PC-3 (cell line): ENCODE measurements at regions of chr4 and their contacts with region 1.

Region 1: DNA sequence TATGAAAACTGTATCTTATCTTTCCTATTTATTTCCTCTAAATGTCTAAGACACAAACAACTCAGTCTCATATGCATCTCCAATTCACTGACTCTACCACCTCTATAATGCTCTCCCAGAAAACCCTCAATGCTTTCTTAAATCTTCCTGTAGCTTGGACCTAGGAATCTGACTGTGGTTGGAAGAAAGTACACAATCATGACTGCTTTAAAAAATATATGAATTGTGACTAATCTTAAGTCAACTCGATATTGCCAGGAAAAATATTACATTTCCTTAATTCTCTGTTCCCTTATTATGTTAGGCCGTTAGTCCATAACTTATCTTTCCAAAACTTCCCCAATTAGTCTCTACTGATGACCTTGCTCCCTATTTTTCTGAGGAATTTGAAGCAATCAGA is 87.0 kb downstream of the SPCS3 start:
- DNase-seq: peak; percentile 63
- ATAC-seq: peak; percentile 88
- H3K4me3 ChIP-seq: no peak overlapping the region
- H3K27ac ChIP-seq: peak overlapping the region; percentile 65
- H3K4me1 ChIP-seq: peaks cover 40% of the 10 kb centered on the region
- H3K27me3 ChIP-seq: no peaks in the 10 kb centered on the region
- CTCF ChIP-seq: no peak

Region 2: DNA sequence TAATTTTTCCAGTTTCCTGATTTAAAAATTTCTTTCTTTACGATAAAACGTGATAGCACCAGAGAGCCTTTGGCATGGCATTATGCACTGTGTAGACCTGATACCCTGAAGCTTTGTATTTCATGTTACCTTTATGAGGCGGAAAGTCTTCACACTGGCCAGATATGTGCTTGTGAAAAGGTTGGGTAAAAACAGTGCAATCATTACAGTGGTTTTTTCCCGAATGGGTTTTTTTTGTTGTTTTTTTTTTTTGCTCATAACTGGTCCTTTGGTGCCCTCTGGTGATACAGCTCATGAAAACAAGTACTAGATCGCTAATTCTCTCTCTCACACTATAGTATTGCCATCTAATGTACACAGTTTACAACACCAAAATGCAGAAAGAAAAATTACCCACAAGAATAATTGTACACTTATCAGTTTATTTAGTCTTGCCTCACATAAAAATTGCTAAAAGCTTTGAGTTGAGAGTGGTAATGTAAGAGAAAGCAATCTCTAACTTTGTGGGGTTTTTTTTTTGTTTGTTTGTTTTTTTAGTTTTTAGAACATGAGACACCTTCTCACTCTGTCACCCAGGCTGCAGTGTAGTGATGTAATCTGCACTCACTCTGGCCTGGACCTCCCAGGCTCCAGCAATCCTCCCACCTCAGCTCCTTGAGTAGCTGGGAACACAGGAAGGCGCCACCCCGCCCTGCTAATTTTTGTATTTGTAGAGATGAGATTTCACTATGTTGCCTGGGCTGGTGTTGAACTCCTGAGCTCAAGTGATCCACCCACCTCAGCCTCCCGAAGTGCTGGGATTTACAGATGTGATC is 65.7 kb before region 1 on chr4:
- CTCF ChIA-PET with region 1: no interaction called
- POLR2A ChIA-PET with region 1: no interaction called
- intact Hi-C with region 1: no loop called
- DNase-seq: peak; percentile 52
- ATAC-seq: peak; percentile 60
- H3K4me3 ChIP-seq: peak overlapping the region; percentile 49; the same call in 1 of the 2 replicates
- H3K27ac ChIP-seq: no peak overlapping the region
- H3K4me1 ChIP-seq: peaks cover 6% of the 10 kb centered on the region; the same call in 1 of the 2 replicates
- H3K27me3 ChIP-seq: no peaks in the 10 kb centered on the region
- CTCF ChIP-seq: peak; percentile 77

Region 3: DNA sequence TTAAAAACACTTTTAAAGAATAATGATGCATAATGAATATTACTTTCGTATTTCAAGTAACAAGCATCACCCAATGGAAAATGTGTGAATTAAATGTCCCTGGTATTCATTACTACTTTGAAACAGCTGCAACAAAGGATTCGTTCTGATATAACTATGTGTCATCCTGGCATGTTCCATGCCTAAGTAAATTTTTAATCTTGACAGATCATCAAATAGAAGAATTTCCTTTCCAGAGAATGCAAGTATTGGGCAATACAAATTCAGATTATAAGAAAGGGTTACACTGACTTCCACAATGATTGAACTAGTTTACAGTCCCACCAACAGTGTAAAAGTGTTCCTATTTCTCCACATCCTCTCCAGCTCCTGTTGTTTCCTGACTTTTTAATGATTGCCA is 18.3 kb after region 1 on chr4:
- CTCF ChIA-PET with region 1: no interaction called
- POLR2A ChIA-PET with region 1: no interaction called
- intact Hi-C with region 1: loop called (anchors 2 kb)
- DNase-seq: peak; percentile 77
- ATAC-seq: peak; percentile 86
- H3K4me3 ChIP-seq: no peak overlapping the region
- H3K27ac ChIP-seq: peak overlapping the region; percentile 47
- H3K4me1 ChIP-seq: peaks cover 24% of the 10 kb centered on the region
- H3K27me3 ChIP-seq: no peaks in the 10 kb centered on the region
- CTCF ChIP-seq: no peak

Region 4: DNA sequence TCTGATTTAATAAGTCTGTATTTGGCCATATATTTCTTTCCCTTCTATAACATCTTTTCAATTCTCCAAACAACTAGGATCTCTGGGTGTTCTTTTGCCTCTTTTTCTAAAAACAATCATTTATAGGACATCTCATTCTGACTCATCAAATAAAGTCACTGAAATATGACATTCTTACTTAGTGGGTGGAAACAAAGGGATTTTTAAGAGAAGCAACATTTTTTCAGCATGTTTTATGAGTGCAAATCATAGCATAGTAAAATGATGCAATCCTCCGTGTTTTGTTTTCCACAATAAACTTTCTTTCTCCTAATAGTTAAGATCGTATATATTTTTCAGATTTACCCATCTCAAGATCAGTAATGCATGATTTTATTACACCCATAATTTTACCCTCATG is 92.8 kb after region 1 on chr4:
- CTCF ChIA-PET with region 1: no interaction called
- POLR2A ChIA-PET with region 1: no interaction called
- intact Hi-C with region 1: loop called (anchors 2 kb)
- DNase-seq: peak; percentile 92
- ATAC-seq: peak; percentile 81
- H3K4me3 ChIP-seq: peak overlapping the region; percentile 48
- H3K27ac ChIP-seq: peak overlapping the region; percentile 91
- H3K4me1 ChIP-seq: peaks cover 14% of the 10 kb centered on the region
- H3K27me3 ChIP-seq: no peaks in the 10 kb centered on the region
- CTCF ChIP-seq: no peak